ENCODE measurements at regions of chr14 and their contacts with region 1.

Region 1: GRCh38 chr14:75176142-75176820 is at the start of gene TMED10:
- DNase-seq: peak; percentile 85 to 95 (median 93)
- ATAC-seq: peak; percentile 76
- H3K4me3 ChIP-seq: peak within 1 kb of the TSS; percentile 80 to 94
- H3K4me3 Mint-ChIP-seq: peak within 1 kb of the TSS; percentile 91
- H3K27ac ChIP-seq: peak within 1 kb of the TSS; percentile 98
- H3K27ac Mint-ChIP-seq: peak within 1 kb of the TSS; percentile 98
- H3K4me1 ChIP-seq: peaks cover 23% of the 10 kb centered on the region
- H3K4me1 Mint-ChIP-seq: peaks cover 44% of the 10 kb centered on the region
- H3K27me3 ChIP-seq: no peaks in the 10 kb centered on the region
- H3K27me3 Mint-ChIP-seq: no peaks in the 10 kb centered on the region
- CTCF ChIP-seq: no peak
- total RNA-seq, gene TMED10: 126 to 129 TPM

Region 2: GRCh38 chr14:74881431-74882361 is 294.6 kb before region 1 on chr14 and contains the start of gene DLST:
- CTCF ChIA-PET with region 1: no interaction called
- POLR2A ChIA-PET with region 1: no interaction called
- intact Hi-C with region 1: loop called (anchors 1 to 2 kb)
- DNase-seq: peak; percentile 74 to 92 (median 85)
- ATAC-seq: peak; percentile 76
- H3K4me3 ChIP-seq: peak within 1 kb of the TSS; percentile 62 to 80
- H3K4me3 Mint-ChIP-seq: peak within 1 kb of the TSS; percentile 99
- H3K27ac ChIP-seq: peak within 1 kb of the TSS; percentile 82 to 90
- H3K27ac Mint-ChIP-seq: peak within 1 kb of the TSS; percentile 100
- H3K4me1 ChIP-seq: peaks cover 44% of the 10 kb centered on the region
- H3K4me1 Mint-ChIP-seq: peaks cover 62% of the 10 kb centered on the region
- H3K27me3 ChIP-seq: no peaks in the 10 kb centered on the region
- H3K27me3 Mint-ChIP-seq: no peaks in the 10 kb centered on the region
- CTCF ChIP-seq: no peak
- total RNA-seq, gene DLST: 142 to 156 TPM

Region 3: GRCh38 chr14:75011356-75011994 is 164.8 kb before region 1 on chr14:
- CTCF ChIA-PET with region 1: no interaction called
- POLR2A ChIA-PET with region 1: no interaction called
- intact Hi-C with region 1: no loop called
- DNase-seq: peak in 1 of 9 experiments; percentile 12
- ATAC-seq: peak; percentile 38
- H3K4me3 ChIP-seq: no peak overlapping the region
- H3K4me3 Mint-ChIP-seq: no peak overlapping the region
- H3K27ac ChIP-seq: peak overlapping the region in 1 of 2 experiments; percentile 11
- H3K27ac Mint-ChIP-seq: peak overlapping the region; percentile 58
- H3K4me1 ChIP-seq: peaks cover 3% of the 10 kb centered on the region
- H3K4me1 Mint-ChIP-seq: peaks cover 21% of the 10 kb centered on the region
- H3K27me3 ChIP-seq: no peaks in the 10 kb centered on the region
- H3K27me3 Mint-ChIP-seq: no peaks in the 10 kb centered on the region
- CTCF ChIP-seq: no peak

Region 4: DNA sequence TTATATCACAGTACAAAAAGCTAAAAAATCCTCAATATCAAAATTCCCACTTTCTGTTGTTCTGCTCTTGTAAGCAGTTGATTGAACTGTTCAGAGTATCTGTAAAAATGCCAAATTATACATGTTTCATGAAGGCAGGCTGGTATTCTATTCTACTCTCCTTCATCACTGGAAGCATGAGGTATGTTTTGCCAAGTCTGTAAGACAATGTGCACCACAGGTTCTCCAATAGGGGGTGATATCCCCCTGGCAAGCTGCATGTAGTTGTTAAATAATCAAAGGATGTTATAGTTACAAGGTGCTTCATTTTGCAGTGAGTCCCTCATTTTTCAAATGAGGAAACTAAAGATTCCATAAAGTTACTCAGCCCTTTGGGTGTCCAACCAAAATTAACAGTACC is 34.3 kb before region 1 on chr14:
- CTCF ChIA-PET with region 1: no interaction called
- POLR2A ChIA-PET with region 1: interaction called, 3 read pairs
- intact Hi-C with region 1: loop called (anchors 2 to 5 kb)
- DNase-seq: peak in 4 of 9 experiments; percentile 35 to 71 (median 59)
- ATAC-seq: peak; percentile 70
- H3K4me3 ChIP-seq: no peak overlapping the region
- H3K4me3 Mint-ChIP-seq: no peak overlapping the region
- H3K27ac ChIP-seq: no peak overlapping the region
- H3K27ac Mint-ChIP-seq: peak overlapping the region; percentile 55
- H3K4me1 ChIP-seq: peaks cover 50% of the 10 kb centered on the region
- H3K4me1 Mint-ChIP-seq: peaks cover 70% of the 10 kb centered on the region
- H3K27me3 ChIP-seq: no peaks in the 10 kb centered on the region
- H3K27me3 Mint-ChIP-seq: no peaks in the 10 kb centered on the region
- CTCF ChIP-seq: peak; percentile 52

Region 5: DNA sequence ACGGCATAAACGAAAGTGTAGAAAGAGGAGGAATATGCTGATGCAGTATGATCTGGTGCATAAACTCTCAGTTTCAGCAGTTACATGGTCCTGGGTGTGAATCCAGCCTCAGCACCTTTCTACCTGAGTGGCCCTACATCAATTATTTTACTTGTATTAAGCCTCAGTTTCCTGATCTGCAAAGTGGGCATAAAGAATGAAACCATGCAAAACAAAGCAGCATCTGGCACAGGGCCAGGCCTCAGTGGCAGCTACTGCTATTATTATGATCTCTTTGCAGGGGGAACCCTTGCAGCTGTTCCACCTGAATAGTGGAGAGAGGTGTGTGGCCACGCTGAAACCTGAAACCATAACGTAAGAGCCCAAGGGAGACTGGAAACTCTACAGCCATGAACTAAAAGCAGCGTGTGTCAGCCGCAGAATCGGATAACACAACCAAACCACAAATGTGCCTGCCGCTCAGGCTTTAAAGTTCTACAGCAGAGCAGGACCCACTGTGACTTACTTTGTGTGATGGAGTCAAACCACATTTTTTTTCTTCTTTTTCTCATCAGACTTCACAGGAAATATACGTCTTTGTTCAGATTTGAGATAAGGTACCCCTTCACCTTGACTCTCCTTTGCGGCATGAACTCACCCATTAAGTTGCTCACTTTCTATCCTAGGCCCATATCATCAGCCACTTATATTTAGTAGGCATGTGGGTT is 73.1 kb after region 1 on chr14:
- CTCF ChIA-PET with region 1: no interaction called
- POLR2A ChIA-PET with region 1: interaction called, 8 read pairs
- intact Hi-C with region 1: loop called (anchors 1 kb)
- DNase-seq: peak; percentile 68 to 97 (median 81)
- ATAC-seq: peak; percentile 74
- H3K4me3 ChIP-seq: peak overlapping the region; percentile 9 to 24
- H3K4me3 Mint-ChIP-seq: peak overlapping the region; percentile 13
- H3K27ac ChIP-seq: peak overlapping the region; percentile 84 to 90
- H3K27ac Mint-ChIP-seq: peak overlapping the region; percentile 88
- H3K4me1 ChIP-seq: peaks cover 62% of the 10 kb centered on the region
- H3K4me1 Mint-ChIP-seq: peaks cover 58% of the 10 kb centered on the region
- H3K27me3 ChIP-seq: no peaks in the 10 kb centered on the region
- H3K27me3 Mint-ChIP-seq: no peaks in the 10 kb centered on the region
- CTCF ChIP-seq: no peak

Region 6: GRCh38 chr14:75278422-75279161 is 102.3 kb after region 1 on chr14 and contains the start of gene FOS:
- CTCF ChIA-PET with region 1: no interaction called
- POLR2A ChIA-PET with region 1: no interaction called
- intact Hi-C with region 1: loop called (anchors 1 kb)
- DNase-seq: peak; percentile 81 to 98 (median 91)
- ATAC-seq: peak; percentile 67
- H3K4me3 ChIP-seq: peak within 1 kb of the TSS; percentile 77 to 89
- H3K4me3 Mint-ChIP-seq: peak within 1 kb of the TSS; percentile 97
- H3K27ac ChIP-seq: peak within 1 kb of the TSS; percentile 81 to 90
- H3K27ac Mint-ChIP-seq: peak within 1 kb of the TSS; percentile 98
- H3K4me1 ChIP-seq: peaks cover 55% of the 10 kb centered on the region
- H3K4me1 Mint-ChIP-seq: peaks cover 47% of the 10 kb centered on the region
- H3K27me3 ChIP-seq: peaks cover 10 to 38% of the 10 kb centered on the region in 2 experiments
- H3K27me3 Mint-ChIP-seq: peaks cover 17% of the 10 kb centered on the region
- CTCF ChIP-seq: no peak
- total RNA-seq, gene FOS: 1,826 to 1,941 TPM

Region 7: DNA sequence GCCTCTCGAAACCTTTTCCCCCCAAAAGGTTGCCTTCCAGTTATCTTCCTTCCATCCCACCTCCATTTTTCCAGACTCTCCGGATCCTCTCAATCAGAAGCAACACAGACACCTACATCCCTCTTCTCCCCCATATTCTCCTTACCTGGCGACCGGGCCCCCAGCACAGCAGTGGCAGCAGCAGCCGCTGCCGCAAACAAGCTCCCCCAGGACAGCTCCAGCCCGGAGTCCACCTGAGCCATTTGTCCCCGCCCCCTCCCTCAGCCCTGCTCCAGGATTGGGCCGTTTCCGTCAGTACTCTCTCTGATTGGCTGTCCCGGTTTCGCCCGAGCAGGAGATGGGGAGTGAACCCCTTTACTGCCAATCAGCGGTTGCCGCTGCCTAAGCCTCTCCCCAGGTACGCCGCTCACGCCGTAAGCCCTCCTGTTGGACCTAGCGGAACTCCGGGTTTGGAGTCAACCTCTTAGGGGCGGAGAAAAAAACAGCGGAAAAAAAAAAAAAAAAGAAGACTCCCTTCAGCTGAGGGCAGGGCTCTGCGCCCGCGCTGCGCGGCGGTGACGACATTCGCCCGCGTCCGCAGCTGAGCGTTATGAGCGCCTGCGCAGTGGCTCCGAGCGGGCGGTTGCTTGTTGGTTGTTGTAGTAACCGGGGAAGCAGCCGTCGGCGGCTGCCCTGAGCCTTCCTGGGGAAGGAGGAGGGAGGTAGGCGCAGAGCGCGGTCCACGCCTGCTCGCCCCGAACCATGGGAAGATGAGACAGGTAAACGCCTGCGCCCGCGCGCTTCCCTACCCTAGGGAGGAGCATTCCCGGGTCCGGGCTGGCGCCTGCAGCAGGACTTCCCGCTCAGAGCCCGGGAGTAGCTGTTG is 484.6 kb after region 1 on chr14 and contains the starts of genes ERG28 and TTLL5:
- CTCF ChIA-PET with region 1: no interaction called
- POLR2A ChIA-PET with region 1: no interaction called
- intact Hi-C with region 1: loop called in 1 of 2 experiments (anchors 1 kb)
- DNase-seq: peak; percentile 94 to 99 (median 95)
- ATAC-seq: peak; percentile 93
- H3K4me3 ChIP-seq: peak within 1 kb of the TSS; percentile 86 to 87
- H3K4me3 Mint-ChIP-seq: peak within 1 kb of the TSS; percentile 98
- H3K27ac ChIP-seq: peak within 1 kb of the TSS; percentile 85 to 93
- H3K27ac Mint-ChIP-seq: peak within 1 kb of the TSS; percentile 97
- H3K4me1 ChIP-seq: peaks cover 10% of the 10 kb centered on the region
- H3K4me1 Mint-ChIP-seq: peaks cover 36% of the 10 kb centered on the region
- H3K27me3 ChIP-seq: no peaks in the 10 kb centered on the region
- H3K27me3 Mint-ChIP-seq: no peaks in the 10 kb centered on the region
- CTCF ChIP-seq: no peak
- total RNA-seq, gene ERG28: 6.6 to 6.7 TPM
- total RNA-seq, gene TTLL5: 17.6 to 17.7 TPM